GM18951 (cell line): ENCODE measurements at regions of chr15 and their contacts with region 1.

Region 1: DNA sequence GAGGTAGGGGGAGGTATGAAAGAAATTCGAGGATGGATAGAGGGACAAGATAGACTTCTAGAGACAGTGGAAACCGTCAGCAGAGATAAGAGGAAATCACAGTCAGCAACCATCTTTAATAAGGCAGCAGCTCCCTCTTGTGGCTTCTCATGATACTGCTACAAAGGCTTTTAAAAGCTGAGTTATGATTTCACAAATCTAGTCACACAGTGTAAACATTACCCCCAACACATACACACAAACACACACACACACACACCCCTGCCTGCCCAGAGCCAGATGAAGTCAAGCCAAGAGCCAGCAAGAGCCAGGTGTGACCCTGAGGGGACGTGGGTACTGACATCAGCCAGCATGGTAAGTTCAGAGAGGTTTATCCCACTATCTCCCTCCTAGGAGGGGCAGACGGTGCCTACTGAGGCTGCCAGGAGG is 18.9 kb upstream of the TGM5 start:
- POLR2A ChIP-seq: no peak

Region 2: GRCh38 chr15:43230640-43231115 is 54.9 kb before region 1 on chr15:
- in situ Hi-C with region 1: loop called (anchors 5 kb)
- POLR2A ChIP-seq: no peak